Activated T-helper 2 cell treated with anti-CD3 and anti-CD28 coated beads, Interferon-gamma antibody, Interleukin-2, Interleukin-4, amounts not matched to agents 10 μg/mL and 5 μg/mL and 100 μg/mL, durations not matched to agents 14 hours and 24 hours and 36 hours (primary cell): ENCODE measurements at regions of chr2 and their contacts with region 1.

Region 1: GRCh38 chr2:203997980-203998809 is 61.6 kb downstream of the ICOS start:
- DNase-seq: no peak
- H3K4me3 Mint-ChIP-seq: peak overlapping the region; percentile 24
- H3K27ac Mint-ChIP-seq: peak overlapping the region; percentile 77
- H3K4me1 Mint-ChIP-seq: peaks cover 64% of the 10 kb centered on the region
- H3K27me3 Mint-ChIP-seq: no peaks in the 10 kb centered on the region

Region 2: DNA sequence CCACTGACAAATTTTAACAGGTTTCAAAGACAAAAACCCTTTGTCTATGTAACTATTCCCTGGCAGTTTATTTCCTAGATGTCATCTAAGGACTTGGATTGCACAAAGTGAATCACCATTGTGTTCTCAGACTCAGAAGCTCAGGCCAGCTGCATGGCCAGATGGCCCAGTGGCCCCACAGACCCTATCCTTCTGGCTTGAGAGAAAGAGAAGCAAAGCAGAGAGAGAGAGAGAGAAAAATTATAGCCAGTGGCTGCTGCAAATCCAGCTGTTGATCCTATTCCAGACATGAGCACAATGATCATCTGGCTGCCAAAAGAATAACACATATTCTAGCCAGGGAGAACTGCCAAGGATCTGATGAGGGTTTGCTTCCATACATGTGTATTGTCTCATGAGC is 104.8 kb before region 1 on chr2:
- intact Hi-C with region 1: loop called (anchors 5 kb)
- DNase-seq: no peak
- H3K4me3 Mint-ChIP-seq: no peak overlapping the region
- H3K27ac Mint-ChIP-seq: peak overlapping the region; percentile 92
- H3K4me1 Mint-ChIP-seq: peaks cover 79% of the 10 kb centered on the region
- H3K27me3 Mint-ChIP-seq: no peaks in the 10 kb centered on the region

Region 3: DNA sequence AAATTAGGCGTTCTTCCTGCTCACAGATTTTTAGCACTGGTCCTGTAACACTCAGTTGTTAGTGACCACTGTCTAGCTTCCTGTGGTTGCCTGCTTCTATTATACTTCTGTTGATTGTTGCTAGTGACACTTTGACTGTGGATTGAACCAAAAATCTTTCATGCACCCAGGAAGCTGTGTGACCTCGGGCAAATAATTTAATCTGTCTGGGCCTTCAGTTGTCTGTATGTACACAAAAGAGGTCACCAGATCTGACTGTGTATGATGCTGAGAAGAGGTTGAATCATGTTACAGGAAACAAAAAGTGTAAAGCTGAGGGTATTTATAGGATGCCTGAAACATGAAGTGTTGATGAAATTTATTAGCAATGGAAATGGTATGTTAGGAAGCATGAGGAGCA is 49.0 kb before region 1 on chr2:
- intact Hi-C with region 1: loop called (anchors 1 kb)
- DNase-seq: no peak
- H3K4me3 Mint-ChIP-seq: peak overlapping the region; percentile 23
- H3K27ac Mint-ChIP-seq: peak overlapping the region; percentile 47
- H3K4me1 Mint-ChIP-seq: peaks cover 81% of the 10 kb centered on the region
- H3K27me3 Mint-ChIP-seq: no peaks in the 10 kb centered on the region

Region 4: DNA sequence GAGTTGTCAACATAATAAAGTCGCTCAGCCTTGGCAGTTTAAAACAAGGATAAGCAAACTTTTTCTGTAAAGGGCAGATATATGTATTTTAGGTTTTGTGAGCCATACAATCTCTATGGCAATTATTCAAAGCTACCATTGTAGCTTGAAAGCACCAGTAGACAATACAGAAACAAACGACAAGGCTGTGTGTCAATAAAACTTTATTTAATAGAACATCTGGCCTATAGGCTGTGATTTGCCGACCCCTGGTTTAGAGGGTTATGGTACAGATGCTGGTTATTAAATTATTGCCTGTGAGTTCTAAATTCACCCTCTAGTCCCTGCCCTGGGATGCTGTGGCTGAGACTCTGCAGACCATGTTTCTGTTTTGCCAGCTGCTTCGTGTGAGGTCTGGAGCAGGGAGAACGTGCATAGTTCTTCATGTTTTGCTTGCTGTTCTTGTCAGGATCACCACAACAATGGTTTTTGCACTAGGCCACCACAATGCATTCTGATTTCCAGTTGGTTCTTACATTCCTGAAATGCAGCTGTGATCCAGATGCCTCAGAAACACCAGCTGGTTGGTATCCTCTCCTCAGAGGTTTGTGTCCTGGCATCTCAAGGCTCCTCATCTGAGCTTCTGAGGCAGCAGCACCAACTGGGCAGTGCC is 15.0 kb before region 1 on chr2:
- intact Hi-C with region 1: loop called (anchors 1 kb)
- DNase-seq: no peak
- H3K4me3 Mint-ChIP-seq: no peak overlapping the region
- H3K27ac Mint-ChIP-seq: no peak overlapping the region
- H3K4me1 Mint-ChIP-seq: peaks cover 39% of the 10 kb centered on the region
- H3K27me3 Mint-ChIP-seq: peaks cover 3% of the 10 kb centered on the region